PC-3 (cell line): ENCODE measurements at regions of chr7 and their contacts with region 1.

Region 1: DNA sequence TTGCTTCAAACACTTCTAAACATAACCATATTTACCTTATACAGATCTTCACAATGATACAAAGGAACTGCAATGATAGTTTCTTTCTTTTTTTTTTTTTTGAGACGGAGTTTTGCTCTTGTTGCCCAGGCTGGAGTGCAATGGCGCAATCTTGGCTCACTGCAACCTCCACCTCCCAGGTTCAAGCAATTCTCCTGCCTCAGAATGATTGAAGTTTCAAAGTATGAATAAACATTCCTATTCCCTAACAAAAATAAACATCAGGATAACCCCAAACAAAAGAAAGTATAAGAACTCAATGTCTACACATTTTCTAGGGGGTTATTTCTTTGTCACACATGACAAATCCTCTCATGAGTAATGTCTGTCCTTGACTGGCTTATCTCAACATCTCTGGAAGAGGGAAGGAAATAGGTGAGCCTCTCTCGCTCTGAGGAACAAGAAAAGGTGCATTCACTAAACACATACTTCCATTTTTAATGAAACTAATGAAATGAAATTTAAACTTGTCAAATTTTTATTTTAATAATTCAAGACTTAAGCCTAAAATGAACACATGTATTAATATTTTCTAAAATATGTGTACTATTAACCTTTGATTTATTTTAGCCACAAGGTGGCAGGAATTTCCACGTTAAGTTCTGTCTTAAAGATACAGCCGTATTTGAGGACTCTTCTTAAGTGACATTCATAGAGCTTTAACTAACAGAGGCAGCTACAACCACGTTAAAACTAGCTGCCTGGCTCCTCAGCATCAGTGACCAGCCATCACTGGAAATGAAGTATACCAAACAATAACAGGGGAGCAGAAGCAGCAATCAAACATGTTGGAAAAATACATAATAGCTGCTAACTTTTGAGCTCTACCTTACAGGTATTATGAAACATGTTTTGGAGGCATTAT is 58.3 kb downstream of the MALSU1 start:
- DNase-seq: peak; percentile 87
- ATAC-seq: peak; percentile 85
- H3K4me3 ChIP-seq: peak overlapping the region; percentile 54; the same call in 1 of the 2 replicates
- H3K27ac ChIP-seq: peak overlapping the region; percentile 85
- H3K4me1 ChIP-seq: peaks cover 38% of the 10 kb centered on the region
- H3K27me3 ChIP-seq: no peaks in the 10 kb centered on the region
- CTCF ChIP-seq: peak; percentile 75

Region 2: GRCh38 chr7:23273141-23273599 is 84.3 kb before region 1 on chr7:
- CTCF ChIA-PET with region 1: interaction called, 11 read pairs
- POLR2A ChIA-PET with region 1: no interaction called
- intact Hi-C with region 1: loop called (anchors 1 kb)
- DNase-seq: peak; percentile 96
- ATAC-seq: peak; percentile 94
- H3K4me3 ChIP-seq: peak overlapping the region; percentile 29; the same call in 1 of the 2 replicates
- H3K27ac ChIP-seq: peak overlapping the region; percentile 40
- H3K4me1 ChIP-seq: peaks cover 9% of the 10 kb centered on the region
- H3K27me3 ChIP-seq: no peaks in the 10 kb centered on the region
- CTCF ChIP-seq: peak; percentile 90

Region 3: DNA sequence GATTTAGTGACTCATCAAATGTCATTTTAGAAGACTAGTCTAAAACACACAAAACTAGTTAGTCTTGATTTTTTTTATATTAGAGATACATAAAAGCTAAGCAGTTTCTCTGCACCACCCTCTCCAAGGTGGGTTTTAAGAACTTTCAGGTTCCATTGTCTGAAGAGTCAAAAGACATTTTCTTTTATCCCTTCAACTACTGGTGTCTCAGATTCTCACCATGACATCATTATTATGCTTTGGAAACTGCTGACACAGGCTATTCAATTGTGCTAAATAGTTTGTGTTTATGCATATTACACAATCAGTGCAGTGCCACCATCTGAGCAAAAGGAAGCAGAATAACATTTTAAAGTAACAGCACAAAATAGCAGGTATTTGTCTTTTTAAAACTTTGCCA is 60.6 kb after region 1 on chr7:
- CTCF ChIA-PET with region 1: interaction called, 3 read pairs
- POLR2A ChIA-PET with region 1: no interaction called
- intact Hi-C with region 1: loop called (anchors 2 kb)
- DNase-seq: peak; percentile 79
- ATAC-seq: peak; percentile 75
- H3K4me3 ChIP-seq: peak overlapping the region; percentile 36
- H3K27ac ChIP-seq: peak overlapping the region; percentile 64
- H3K4me1 ChIP-seq: peaks cover 25% of the 10 kb centered on the region
- H3K27me3 ChIP-seq: no peaks in the 10 kb centered on the region
- CTCF ChIP-seq: 0 out of 2 replicates have a peak, but pooled peaks have one; percentile 16

Region 4: GRCh38 chr7:23462846-23463245 is 105.4 kb after region 1 on chr7:
- CTCF ChIA-PET with region 1: interaction called, 36 read pairs
- POLR2A ChIA-PET with region 1: no interaction called
- intact Hi-C with region 1: loop called (anchors 1 kb)
- DNase-seq: peak; percentile 61
- ATAC-seq: peak; percentile 71
- H3K4me3 ChIP-seq: no peak overlapping the region
- H3K27ac ChIP-seq: no peak overlapping the region
- H3K4me1 ChIP-seq: peaks cover 40% of the 10 kb centered on the region
- H3K27me3 ChIP-seq: no peaks in the 10 kb centered on the region
- CTCF ChIP-seq: peak; percentile 63

Region 5: GRCh38 chr7:23520582-23520981 is 163.1 kb after region 1 on chr7:
- CTCF ChIA-PET with region 1: no interaction called
- POLR2A ChIA-PET with region 1: no interaction called
- intact Hi-C with region 1: no loop called
- DNase-seq: no peak
- ATAC-seq: no peak
- H3K4me3 ChIP-seq: no peak overlapping the region
- H3K27ac ChIP-seq: no peak overlapping the region
- H3K4me1 ChIP-seq: no peaks in the 10 kb centered on the region
- H3K27me3 ChIP-seq: no peaks in the 10 kb centered on the region
- CTCF ChIP-seq: peak; percentile 37

Region 6: DNA sequence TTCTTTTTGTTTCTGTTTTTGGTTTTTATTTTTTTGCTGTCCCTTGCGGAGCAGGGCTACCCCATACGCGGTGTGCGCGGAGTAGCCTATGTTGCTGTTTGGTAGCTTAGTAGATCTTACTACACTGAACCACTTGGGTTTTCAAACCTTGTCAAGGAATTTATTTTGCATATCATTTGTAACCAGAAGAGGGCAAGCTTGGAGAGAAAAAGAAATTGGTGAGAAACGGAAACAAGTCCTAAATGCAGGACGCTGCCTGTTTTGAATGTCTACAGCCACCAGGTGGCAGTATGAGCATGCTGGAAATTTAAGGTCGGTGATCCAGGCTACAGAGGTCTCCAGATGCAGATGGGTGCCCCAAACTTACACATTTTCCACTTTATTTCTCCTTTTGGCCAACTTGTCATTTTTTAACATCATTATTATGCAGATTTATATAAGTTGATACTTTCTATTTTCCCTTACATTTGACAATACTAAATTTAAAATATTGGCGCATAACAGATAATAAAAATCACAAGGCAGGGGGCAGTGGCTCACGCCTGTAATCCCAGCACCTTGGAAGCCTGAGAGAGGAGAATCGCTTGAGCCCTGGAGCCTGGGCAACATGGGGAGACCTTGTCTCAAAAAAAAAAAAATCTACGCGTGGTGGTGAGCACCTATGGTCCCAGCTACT is 189.6 kb after region 1 on chr7:
- CTCF ChIA-PET with region 1: interaction called, 6 read pairs
- POLR2A ChIA-PET with region 1: interaction called, 3 read pairs
- intact Hi-C with region 1: loop called (anchors 1 kb)
- DNase-seq: peak; percentile 94
- ATAC-seq: peak; percentile 81
- H3K4me3 ChIP-seq: no peak overlapping the region
- H3K27ac ChIP-seq: no peak overlapping the region
- H3K4me1 ChIP-seq: no peaks in the 10 kb centered on the region
- H3K27me3 ChIP-seq: no peaks in the 10 kb centered on the region
- CTCF ChIP-seq: peak; percentile 92